Heart left ventricle (tissue), 16 donors: ENCODE measurements at regions of chr18 and their contacts with region 1.

Region 1: DNA sequence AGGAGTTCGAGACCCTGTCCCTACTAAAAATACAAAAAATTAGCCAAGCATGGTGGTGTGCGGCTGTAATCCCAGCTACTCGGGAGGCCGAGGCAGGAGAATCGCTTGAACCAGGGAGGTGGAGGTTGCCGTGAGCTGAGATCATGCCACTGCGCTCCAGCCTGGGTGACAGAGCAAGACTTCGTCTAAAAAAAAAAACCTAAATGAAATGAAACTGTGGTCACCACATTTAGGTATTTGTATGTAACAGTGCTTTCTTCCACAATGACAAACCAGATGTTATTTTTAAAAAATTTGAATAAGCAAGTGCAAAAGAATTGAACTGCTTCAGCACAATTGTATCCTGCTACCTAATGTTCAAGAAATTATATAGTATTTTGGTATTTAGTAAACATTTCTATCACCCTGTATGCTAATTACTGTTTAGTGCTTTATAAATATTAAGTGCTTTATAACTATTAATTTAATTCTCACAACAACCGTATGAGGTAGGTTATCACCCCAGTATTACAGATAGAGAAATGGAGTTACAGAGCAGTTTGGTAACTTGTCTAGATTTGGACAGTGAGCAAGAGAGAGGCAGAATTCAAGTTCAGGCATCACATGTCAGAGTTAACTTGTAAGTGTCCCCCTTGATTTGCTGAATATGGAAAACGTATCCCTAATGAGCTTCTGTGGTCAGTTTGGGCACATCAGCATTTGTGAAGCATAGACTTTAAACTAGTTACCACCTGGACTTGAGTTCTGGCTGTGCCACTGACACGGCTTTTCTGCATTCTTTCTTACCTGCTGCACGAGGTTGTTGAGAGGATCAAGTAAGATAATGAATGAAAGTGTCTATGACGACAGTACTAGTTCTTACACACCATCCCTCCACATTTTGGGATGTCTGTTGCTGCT is 14.4 kb downstream of the PHLPP1 start:
- DNase-seq: no peak
- ATAC-seq: no peak
- H3K4me3 ChIP-seq: no peak overlapping the region
- H3K27ac ChIP-seq: no peak overlapping the region
- H3K4me1 ChIP-seq: peaks cover 0 to 10% (median 0%) of the 10 kb centered on the region in 12 donors
- H3K27me3 ChIP-seq: no peaks in the 10 kb centered on the region
- CTCF ChIP-seq: no peak
- POLR2A ChIP-seq: no peak

Region 2: DNA sequence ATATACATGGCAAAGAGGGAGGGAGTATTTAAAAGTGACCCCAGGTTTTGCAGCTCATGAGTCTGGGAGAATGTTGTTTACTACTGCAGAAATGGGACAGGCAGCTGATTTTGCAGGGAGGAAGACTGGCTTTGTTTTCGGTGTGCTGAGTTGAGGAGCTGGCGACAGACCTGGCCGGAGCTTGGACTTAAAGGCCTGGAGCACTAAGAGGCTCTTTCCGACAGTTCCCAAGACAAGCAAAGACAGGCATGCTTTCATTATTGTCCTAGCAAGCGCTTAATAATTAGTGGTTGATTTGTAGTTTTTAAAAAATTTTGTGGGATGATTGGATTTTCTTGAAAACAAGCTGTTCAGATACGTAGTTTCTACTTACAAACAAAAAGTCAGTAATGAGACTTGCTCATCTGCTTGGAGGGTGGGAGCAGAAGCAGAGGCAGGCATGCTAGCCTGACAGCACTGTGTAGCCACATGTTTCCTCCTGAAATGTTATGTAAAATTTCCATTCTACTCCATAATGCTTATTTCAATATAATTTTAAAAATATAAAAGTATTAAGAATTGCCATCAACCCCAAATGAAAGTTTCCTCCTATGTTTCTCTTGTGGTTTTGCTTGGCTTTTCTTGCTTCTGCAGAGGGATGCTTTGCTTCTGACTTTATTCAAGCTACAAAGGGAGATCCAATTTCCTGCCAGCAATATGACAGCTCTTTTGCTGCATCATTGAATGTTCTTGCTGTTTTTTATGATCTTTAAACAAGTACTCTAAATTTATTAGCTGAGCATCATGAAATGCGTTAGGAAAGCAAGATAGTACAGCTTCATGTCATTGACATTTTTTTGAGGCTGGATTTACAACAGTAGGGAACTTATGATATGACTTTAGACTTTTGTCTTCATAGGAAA is 61.4 kb after region 1 on chr18:
- intact Hi-C with region 1: loop called in 3 of 10 experiments (anchors 5 to 10 kb)
- DNase-seq: peak in 1 of 5 donors; percentile 9
- ATAC-seq: peak in 2 of 4 donors; percentile 41 to 45
- H3K4me3 ChIP-seq: peak overlapping the region in 4 of 12 donors; percentile 10 to 23 (median 13)
- H3K27ac ChIP-seq: peak overlapping the region in 3 of 12 donors; percentile 13 to 21 (median 15)
- H3K4me1 ChIP-seq: peaks cover 0 to 21% (median 7%) of the 10 kb centered on the region in 12 donors
- H3K27me3 ChIP-seq: no peaks in the 10 kb centered on the region
- CTCF ChIP-seq: no peak
- POLR2A ChIP-seq: no peak

Region 3: DNA sequence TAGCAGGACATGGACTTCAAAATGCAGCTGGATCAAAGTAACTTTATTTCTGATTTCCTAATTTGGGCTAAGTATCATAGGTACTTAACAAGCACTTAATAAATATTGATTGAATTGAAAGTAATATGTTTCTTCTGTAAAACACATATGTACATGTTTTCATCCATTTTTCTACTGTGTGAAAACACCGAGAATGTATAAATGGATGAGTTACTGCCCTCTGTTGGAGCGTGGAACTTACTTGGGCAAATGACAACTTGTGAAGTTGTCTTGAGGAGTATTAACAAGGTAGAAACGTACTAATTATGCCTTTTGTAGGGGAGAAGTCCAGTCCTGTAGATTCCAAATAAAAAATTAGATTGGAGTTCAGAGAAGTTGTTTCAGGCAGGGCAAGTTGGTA is 72.8 kb after region 1 on chr18:
- intact Hi-C with region 1: loop called in 3 of 10 experiments (anchors 10 kb)
- DNase-seq: no peak
- ATAC-seq: no peak
- H3K4me3 ChIP-seq: no peak overlapping the region
- H3K27ac ChIP-seq: no peak overlapping the region
- H3K4me1 ChIP-seq: peaks cover 0 to 13% (median 0%) of the 10 kb centered on the region in 12 donors
- H3K27me3 ChIP-seq: no peaks in the 10 kb centered on the region
- CTCF ChIP-seq: peak in 8 of 12 donors; percentile 12 to 40 (median 18)
- POLR2A ChIP-seq: no peak

Region 4: GRCh38 chr18:62850619-62851309 is 121.0 kb after region 1 on chr18:
- intact Hi-C with region 1: loop called in 1 of 10 experiments (anchors 10 kb)
- DNase-seq: no peak
- ATAC-seq: peak; percentile 31 to 75 (median 56)
- H3K4me3 ChIP-seq: peak overlapping the region in 1 of 12 donors; percentile 5
- H3K27ac ChIP-seq: peak overlapping the region in 11 of 12 donors; percentile 0 to 59 (median 29)
- H3K4me1 ChIP-seq: peaks cover 0 to 22% (median 6%) of the 10 kb centered on the region in 12 donors
- H3K27me3 ChIP-seq: no peaks in the 10 kb centered on the region
- CTCF ChIP-seq: no peak
- POLR2A ChIP-seq: no peak